Right ventricle myocardium inferior (tissue), 1 donor: ENCODE measurements at regions of chr3 and their contacts with region 1.

Region 1: GRCh38 chr3:37862219-37862902 is 681 bp downstream of the CTDSPL start:
- DNase-seq: peak; percentile 78
- ATAC-seq: peak; percentile 15

Region 2: GRCh38 chr3:37892927-37893600 is 30.7 kb after region 1 on chr3:
- intact Hi-C with region 1: loop called (anchors 2 kb)
- DNase-seq: peak; percentile 70
- ATAC-seq: peak; percentile 97

Region 3: GRCh38 chr3:37909067-37909911 is 46.9 kb after region 1 on chr3:
- intact Hi-C with region 1: no loop called
- DNase-seq: no peak
- ATAC-seq: peak; percentile 38